ENCODE measurements at regions of chr3 and their contacts with region 1.

Region 1: GRCh38 chr3:169241991-169242707 is 421.4 kb downstream of the MECOM start:
- DNase-seq: peak; percentile 67

Region 2: DNA sequence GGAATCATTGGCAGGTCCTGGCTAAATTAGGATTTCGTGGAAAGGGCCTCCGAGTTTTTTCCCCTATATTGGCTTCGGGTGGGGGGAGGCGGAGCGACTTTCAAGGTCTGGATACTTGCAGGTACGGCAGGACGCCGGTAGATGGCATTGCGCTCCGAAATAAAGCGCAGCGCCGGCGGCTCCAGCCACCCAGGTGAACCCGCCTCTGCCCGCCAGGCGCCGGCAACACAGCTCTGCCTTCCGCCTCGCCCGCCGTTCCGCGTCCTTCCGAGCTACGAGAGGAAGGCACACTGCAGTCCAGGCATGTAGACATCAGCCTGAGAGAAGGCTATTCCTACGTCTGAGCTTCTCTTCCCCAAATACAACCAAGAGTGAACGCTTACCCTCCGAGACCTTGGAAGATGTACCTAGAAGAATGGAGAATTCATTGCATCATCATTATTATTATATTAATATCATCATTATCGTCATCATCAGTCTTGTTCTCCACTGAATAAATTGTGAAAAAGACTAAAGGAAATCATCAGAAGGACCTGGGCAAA is 92.7 kb before region 1 on chr3:
- CTCF ChIA-PET with region 1: no interaction called
- POLR2A ChIA-PET with region 1: interaction called, 10 read pairs
- DNase-seq: peak; percentile 77

Measured in HEK293T (cell line).